A673 (cell line): ENCODE measurements at regions of chr5 and their contacts with region 1.

Region 1: DNA sequence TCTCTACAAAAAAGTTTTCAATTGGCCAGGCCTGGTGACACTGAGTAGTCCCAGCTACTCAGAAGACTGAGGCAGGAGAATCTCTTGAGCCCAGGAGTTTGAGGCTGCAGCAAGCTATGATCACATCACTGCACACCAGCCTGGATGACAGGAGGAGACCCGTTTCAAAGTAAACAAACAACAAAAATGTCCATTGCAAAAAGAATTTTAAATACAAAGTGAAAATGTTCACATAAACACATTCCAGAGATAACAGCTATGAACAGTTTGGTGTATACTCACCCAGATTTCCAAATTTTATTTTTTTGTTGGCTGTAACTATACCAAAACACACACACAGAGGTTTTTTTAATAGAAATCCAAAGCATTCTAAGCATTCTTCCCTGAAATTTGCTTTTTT is 39.8 kb downstream of the ADRA1B start:
- DNase-seq: no peak
- H3K4me3 ChIP-seq: no peak overlapping the region
- H3K27ac ChIP-seq: no peak overlapping the region
- H3K4me1 ChIP-seq: no peaks in the 10 kb centered on the region
- H3K27me3 ChIP-seq: no peaks in the 10 kb centered on the region
- CTCF ChIP-seq: no peak

Region 2: DNA sequence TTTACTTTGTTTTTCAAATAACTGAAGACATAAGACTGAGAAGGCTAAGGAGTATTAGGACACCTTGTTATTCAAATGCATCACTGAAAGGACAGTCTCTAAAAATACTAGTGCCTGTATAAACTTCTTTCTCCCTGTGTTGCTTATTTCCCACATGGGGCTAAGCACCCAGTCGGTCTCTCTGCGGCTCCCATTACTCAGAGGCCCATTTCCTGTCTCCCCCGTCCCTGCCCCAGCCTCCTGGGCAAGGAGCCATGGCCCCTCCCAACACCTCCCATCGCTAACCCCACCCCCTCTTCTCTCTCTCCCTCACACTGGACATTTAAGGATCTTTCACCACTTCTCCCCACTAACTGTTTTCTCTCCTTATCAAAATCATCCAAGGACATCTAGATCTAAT is 938.3 kb before region 1 on chr5:
- CTCF ChIA-PET with region 1: no interaction called
- POLR2A ChIA-PET with region 1: no interaction called
- intact Hi-C with region 1: no loop called
- DNase-seq: peak; percentile 87
- H3K4me3 ChIP-seq: no peak overlapping the region
- H3K27ac ChIP-seq: peak overlapping the region; percentile 55
- H3K4me1 ChIP-seq: peaks cover 49% of the 10 kb centered on the region
- H3K27me3 ChIP-seq: no peaks in the 10 kb centered on the region
- CTCF ChIP-seq: no peak

Region 3: GRCh38 chr5:159891371-159891770 is 64.7 kb before region 1 on chr5:
- CTCF ChIA-PET with region 1: no interaction called
- POLR2A ChIA-PET with region 1: interaction called, 22 read pairs
- intact Hi-C with region 1: no loop called
- DNase-seq: no peak
- H3K4me3 ChIP-seq: no peak overlapping the region
- H3K27ac ChIP-seq: no peak overlapping the region
- H3K4me1 ChIP-seq: no peaks in the 10 kb centered on the region
- H3K27me3 ChIP-seq: no peaks in the 10 kb centered on the region
- CTCF ChIP-seq: no peak